Colonic mucosa (tissue), 4 donors: ENCODE measurements at regions of chr17 and their contacts with region 1.

Region 1: DNA sequence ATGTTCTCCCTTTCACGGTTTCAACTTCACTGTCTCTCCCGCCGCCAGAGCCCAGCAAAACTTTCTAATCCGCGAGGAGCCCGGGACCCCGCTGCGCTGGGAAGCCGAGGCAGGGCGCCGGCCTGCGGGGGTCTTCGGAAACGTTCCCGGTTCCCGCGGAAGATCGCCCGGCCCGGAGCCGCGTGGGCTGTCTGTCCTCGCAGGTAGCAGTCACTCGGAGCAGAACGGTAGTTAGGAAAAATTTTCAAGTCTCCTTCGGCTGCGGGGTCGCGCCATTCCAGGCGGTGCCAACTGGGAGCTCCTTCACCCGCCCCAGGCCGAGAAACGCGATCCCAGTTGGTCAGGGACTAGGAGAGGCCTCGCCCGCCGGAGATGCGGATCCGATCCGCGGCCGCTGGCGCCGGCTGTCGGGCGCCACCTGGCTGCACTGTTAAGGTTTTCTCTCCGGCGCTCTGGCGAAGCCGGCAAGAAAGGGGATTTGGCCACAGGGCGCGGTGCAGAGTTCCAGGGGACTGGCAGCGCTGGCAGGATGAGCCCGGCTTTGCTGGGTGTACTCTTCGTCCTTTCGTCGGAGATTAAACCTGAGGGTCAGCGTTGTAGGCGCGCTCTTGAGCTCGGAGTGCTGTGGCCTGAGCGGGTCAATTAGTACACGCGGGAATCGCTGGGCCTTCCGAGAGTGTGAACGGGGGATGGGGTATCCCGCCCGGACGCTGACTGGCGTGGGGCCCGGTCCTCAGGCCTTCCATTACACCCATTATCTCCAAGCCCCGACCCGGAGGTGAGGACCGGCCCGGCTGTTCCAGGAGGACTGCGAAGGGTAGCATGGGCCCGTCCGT is 135.4 kb downstream of the KCNJ12 start:
- DNase-seq: peak; percentile 79
- H3K4me3 ChIP-seq: peak overlapping the region; percentile 41
- H3K27ac ChIP-seq: no peak overlapping the region
- H3K4me1 ChIP-seq: no peaks in the 10 kb centered on the region
- H3K27me3 ChIP-seq: no peaks in the 10 kb centered on the region
- CTCF ChIP-seq: peak; percentile 76

Region 2: GRCh38 chr17:21124086-21124485 is 387.5 kb before region 1 on chr17:
- intact Hi-C with region 1: loop called (anchors 5 kb)
- DNase-seq: no peak
- H3K4me3 ChIP-seq: no peak overlapping the region
- H3K27ac ChIP-seq: no peak overlapping the region
- H3K4me1 ChIP-seq: peaks cover 4% of the 10 kb centered on the region
- H3K27me3 ChIP-seq: no peaks in the 10 kb centered on the region
- CTCF ChIP-seq: no peak

Region 3: DNA sequence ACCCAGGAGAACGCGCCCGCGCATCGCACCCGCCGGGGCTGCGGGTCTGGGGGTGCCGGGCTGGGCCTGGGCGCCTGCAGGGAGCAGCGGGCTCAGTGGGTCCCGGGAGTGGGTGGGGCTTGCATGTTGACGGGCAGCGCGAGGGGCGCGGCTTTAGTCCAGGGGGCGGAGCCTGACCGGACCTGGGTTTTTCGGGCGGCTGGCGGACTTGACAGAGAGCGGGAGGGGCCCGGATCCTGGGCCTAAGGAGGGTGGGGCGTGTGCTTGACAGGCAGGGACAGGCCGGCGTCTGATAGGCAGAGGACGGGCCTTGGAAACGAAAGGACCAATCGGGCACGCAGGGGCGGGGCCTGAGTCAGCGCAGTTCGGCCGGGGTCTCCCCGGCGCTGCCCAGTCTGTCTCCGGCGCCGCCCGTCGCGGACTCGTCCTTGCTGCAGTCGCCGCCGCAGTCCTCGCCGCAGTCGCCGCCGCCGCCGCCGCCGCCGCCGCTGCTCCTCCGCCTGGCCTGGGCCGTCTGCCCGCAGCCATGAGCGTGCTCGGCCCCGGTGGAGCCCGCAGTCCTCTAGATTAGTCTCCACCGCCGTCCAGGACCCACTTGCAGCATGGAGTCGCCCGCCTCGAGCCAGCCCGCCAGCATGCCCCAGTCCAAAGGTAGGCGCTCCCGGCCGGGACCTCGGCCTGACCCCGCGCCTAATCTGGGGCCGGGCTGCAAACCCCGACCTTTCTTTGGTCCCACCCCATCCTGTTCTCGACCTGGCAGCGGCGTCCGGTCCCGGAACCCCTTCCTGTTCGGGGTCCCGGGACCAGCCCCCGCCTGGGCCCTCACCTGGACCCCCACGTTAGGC is 227.0 kb before region 1 on chr17 and contains the start of gene MAP2K3:
- intact Hi-C with region 1: loop called (anchors 5 kb)
- DNase-seq: peak; percentile 99
- H3K4me3 ChIP-seq: peak within 1 kb of the TSS; percentile 82
- H3K27ac ChIP-seq: peak within 1 kb of the TSS; percentile 93
- H3K4me1 ChIP-seq: peaks cover 21% of the 10 kb centered on the region
- H3K27me3 ChIP-seq: no peaks in the 10 kb centered on the region
- CTCF ChIP-seq: no peak
- total RNA-seq, gene MAP2K3: 64.5 to 67.1 TPM

Region 4: DNA sequence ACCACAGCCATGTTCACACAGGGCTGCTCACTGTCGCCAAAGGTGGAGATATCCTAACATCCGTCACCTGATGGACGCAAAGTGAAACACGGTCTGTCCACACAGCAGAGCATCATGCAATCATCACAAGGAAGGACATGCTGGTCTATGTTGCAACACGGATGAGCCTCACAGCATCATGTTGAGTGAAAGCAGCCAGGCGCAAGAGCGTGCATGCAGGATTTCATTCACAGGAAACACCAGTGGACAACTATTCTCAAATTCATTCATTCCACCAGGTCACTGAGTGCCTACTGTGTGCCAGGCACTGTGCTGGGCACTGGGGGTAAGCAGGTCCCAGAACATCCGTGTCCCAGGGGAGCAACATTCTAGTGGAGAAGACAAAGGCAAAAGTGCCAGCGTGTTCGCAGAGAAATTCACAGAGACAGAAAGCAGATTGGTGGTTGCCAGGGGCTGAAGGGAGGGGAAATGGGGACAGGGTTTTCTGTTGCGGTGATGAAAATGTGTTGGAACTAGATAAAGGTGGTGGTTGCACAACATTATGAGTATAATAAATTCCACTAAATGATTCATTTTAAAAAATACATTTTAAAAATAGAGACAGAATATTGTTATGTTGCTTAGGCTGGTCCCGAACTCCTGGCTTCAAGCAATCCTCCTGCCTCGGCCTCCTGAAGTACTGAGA is 158.1 kb before region 1 on chr17:
- intact Hi-C with region 1: no loop called
- DNase-seq: no peak
- H3K4me3 ChIP-seq: no peak overlapping the region
- H3K27ac ChIP-seq: no peak overlapping the region
- H3K4me1 ChIP-seq: no peaks in the 10 kb centered on the region
- H3K27me3 ChIP-seq: no peaks in the 10 kb centered on the region
- CTCF ChIP-seq: no peak

Region 5: DNA sequence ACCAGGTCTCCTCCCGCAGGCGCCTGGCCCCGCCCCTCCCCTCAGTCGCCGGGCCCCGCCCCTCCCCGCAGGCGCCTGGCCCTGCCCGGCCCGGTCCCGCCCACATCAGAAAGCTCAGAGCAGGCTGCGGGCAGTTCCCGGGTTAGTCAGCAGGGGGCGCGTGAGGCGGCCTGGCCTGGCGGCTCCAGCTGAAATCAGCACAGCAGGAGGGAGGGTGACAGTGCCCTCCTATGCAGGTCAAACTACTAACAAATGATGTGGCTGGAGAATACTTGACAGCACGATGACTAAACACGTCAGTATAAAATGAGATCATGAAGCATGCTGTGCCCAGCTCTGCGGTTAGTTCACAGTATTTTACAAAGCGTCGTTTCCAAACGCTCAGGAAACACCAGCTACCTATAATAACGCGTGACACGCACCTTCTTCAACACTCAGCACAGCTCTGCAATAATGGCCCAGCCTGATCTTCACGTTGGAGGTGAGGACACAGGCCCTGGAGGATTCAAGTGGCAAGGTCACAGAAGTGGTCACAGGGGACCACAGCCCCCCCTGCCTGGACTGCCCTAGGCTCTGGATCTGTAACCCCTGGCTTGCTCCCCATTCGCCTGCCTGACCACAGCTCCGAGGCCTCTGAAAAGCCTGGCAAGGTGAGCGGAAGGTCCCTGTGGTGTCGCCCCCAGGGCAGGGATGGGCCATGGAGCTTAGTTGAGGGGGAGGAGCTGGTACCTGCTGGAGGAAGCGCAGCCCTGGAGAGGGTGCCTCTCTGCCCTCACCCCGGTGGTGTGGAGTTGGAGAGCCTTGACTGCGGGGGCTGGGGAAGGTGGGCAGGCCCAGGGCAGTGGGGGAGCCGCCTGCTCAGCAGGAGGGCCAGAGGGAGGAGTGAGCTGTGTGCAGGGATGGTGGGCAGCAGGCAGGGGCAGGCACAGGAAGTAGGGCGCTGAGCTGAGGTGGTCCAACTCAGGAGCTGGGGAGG is 54.2 kb before region 1 on chr17:
- intact Hi-C with region 1: loop called (anchors 2 kb)
- DNase-seq: peak; percentile 93
- H3K4me3 ChIP-seq: no peak overlapping the region
- H3K27ac ChIP-seq: no peak overlapping the region
- H3K4me1 ChIP-seq: no peaks in the 10 kb centered on the region
- H3K27me3 ChIP-seq: no peaks in the 10 kb centered on the region
- CTCF ChIP-seq: peak; percentile 97